ENCODE measurements at regions of chr4 and their contacts with region 1.

Region 1: GRCh38 chr4:108172753-108173598 is 4.2 kb upstream of the LEF1 start:
- DNase-seq: peak; percentile 68 to 81 (median 78)
- ATAC-seq: peak; percentile 67
- H3K4me3 ChIP-seq: peak overlapping the region; percentile 86
- H3K4me3 Mint-ChIP-seq: peak overlapping the region; percentile 89 to 100 (median 94)
- H3K27ac ChIP-seq: peak overlapping the region; percentile 93
- H3K27ac Mint-ChIP-seq: peak overlapping the region; percentile 90 to 97 (median 95)
- H3K4me1 ChIP-seq: peaks cover 3 to 33% of the 10 kb centered on the region in 2 donors
- H3K4me1 Mint-ChIP-seq: peaks cover 27 to 71% (median 61%) of the 10 kb centered on the region in 7 donors
- H3K27me3 ChIP-seq: no peaks in the 10 kb centered on the region
- H3K27me3 Mint-ChIP-seq: peaks cover 0 to 30% (median 0%) of the 10 kb centered on the region in 5 donors

Region 2: GRCh38 chr4:107989537-107990386 is 183.2 kb before region 1 on chr4 and contains the start of gene HADH:
- CTCF ChIA-PET with region 1: no interaction called
- POLR2A ChIA-PET with region 1: no interaction called
- intact Hi-C with region 1: loop called in 1 of 2 experiments (anchors 2 kb)
- DNase-seq: peak; percentile 92 to 98 (median 96)
- ATAC-seq: peak; percentile 100
- H3K4me3 ChIP-seq: peak within 1 kb of the TSS; percentile 57
- H3K4me3 Mint-ChIP-seq: peak within 1 kb of the TSS; percentile 86 to 99 (median 95)
- H3K27ac ChIP-seq: peak within 1 kb of the TSS; percentile 87
- H3K27ac Mint-ChIP-seq: peak within 1 kb of the TSS; percentile 79 to 98 (median 95)
- H3K4me1 ChIP-seq: peaks cover 8 to 37% of the 10 kb centered on the region in 2 donors
- H3K4me1 Mint-ChIP-seq: peaks cover 28 to 85% (median 71%) of the 10 kb centered on the region in 7 donors
- H3K27me3 ChIP-seq: no peaks in the 10 kb centered on the region
- H3K27me3 Mint-ChIP-seq: no peaks in the 10 kb centered on the region
- total RNA-seq, gene HADH: 16.5 to 38.8 (median 29.7) TPM

Region 3: GRCh38 chr4:108109997-108110416 is 63.0 kb before region 1 on chr4:
- CTCF ChIA-PET with region 1: interaction called, 3 read pairs
- POLR2A ChIA-PET with region 1: interaction called, 160 read pairs
- intact Hi-C with region 1: loop called in 1 of 2 experiments (anchors 1 kb)
- DNase-seq: no peak
- ATAC-seq: no peak
- H3K4me3 ChIP-seq: peak overlapping the region; percentile 7
- H3K4me3 Mint-ChIP-seq: peak overlapping the region; percentile 69 to 89 (median 78)
- H3K27ac ChIP-seq: peak overlapping the region; percentile 80
- H3K27ac Mint-ChIP-seq: peak overlapping the region; percentile 84 to 98 (median 90)
- H3K4me1 ChIP-seq: peaks cover 72 to 98% of the 10 kb centered on the region in 2 donors
- H3K4me1 Mint-ChIP-seq: peaks cover 70 to 97% (median 95%) of the 10 kb centered on the region in 7 donors
- H3K27me3 ChIP-seq: no peaks in the 10 kb centered on the region
- H3K27me3 Mint-ChIP-seq: no peaks in the 10 kb centered on the region

Region 4: DNA sequence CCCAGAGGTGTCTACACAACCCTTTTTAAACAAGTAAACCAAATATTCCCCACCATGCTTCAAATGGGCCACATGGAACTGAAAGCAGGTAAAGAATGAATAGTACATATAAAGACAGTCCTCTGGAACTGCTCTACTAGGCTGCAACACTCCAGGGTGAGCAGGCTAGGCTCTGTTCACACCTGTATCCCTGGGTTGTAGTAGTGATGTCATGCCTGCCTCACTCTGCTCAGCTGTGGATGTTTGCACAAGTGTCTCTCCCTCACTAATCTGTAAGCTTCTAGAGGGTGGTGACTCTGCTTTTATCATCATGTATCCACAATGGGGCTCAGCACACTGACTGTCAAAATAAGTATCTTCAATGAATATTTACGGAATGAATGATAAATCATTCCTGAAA is 24.7 kb before region 1 on chr4:
- CTCF ChIA-PET with region 1: no interaction called
- POLR2A ChIA-PET with region 1: interaction called, 31 read pairs
- intact Hi-C with region 1: no loop called
- DNase-seq: peak in 5 of 9 donors; percentile 44 to 82 (median 47)
- ATAC-seq: peak; percentile 74
- H3K4me3 ChIP-seq: peak overlapping the region; percentile 32
- H3K4me3 Mint-ChIP-seq: peak overlapping the region; percentile 41 to 86 (median 80)
- H3K27ac ChIP-seq: peak overlapping the region; percentile 81
- H3K27ac Mint-ChIP-seq: peak overlapping the region; percentile 36 to 97 (median 92)
- H3K4me1 ChIP-seq: peaks cover 25 to 91% of the 10 kb centered on the region in 2 donors
- H3K4me1 Mint-ChIP-seq: peaks cover 56 to 94% (median 93%) of the 10 kb centered on the region in 7 donors
- H3K27me3 ChIP-seq: no peaks in the 10 kb centered on the region
- H3K27me3 Mint-ChIP-seq: no peaks in the 10 kb centered on the region

Region 5: DNA sequence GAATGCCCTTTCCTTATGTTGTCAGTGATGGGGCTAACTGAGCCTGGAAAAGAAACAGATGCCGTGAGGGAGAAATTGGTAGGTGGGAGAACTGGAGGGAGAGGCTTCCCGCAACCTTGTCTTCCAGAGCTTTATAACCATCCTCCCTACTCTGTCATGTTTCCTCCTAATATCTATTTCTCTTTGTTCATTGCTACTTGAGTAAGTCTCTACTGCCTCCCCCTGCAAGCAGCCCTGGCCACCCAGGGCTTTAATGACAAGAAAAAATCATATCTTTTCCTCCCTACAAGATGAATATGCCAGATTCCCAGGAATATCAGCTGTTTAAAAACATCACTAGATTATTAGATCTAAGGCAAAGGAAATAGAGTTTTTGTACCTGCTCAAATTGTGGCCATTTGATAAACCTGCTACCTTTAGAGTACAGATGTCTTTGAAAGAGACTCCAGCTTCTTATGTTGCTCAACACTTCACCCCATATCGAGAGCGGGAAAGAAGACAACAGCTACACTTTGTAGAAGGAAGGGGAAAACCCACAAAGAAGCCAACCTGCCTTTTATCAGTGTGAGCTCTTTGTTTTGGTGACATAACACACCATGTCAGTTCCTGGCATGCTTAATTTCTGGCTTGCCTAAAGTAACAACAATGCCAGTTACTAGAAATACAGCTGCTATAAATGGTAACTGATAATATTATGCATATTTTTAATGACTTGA is 182.4 kb after region 1 on chr4:
- CTCF ChIA-PET with region 1: interaction called, 3 read pairs
- POLR2A ChIA-PET with region 1: interaction called, 12 read pairs
- intact Hi-C with region 1: loop called (anchors 1 kb)
- DNase-seq: peak in 8 of 9 donors; percentile 28 to 92 (median 86)
- ATAC-seq: peak; percentile 90
- H3K4me3 ChIP-seq: peak overlapping the region; percentile 20
- H3K4me3 Mint-ChIP-seq: peak overlapping the region; percentile 57 to 87 (median 70)
- H3K27ac ChIP-seq: peak overlapping the region; percentile 86
- H3K27ac Mint-ChIP-seq: peak overlapping the region; percentile 76 to 99 (median 96)
- H3K4me1 ChIP-seq: peaks cover 17 to 59% of the 10 kb centered on the region in 2 donors
- H3K4me1 Mint-ChIP-seq: peaks cover 34 to 96% (median 83%) of the 10 kb centered on the region in 7 donors
- H3K27me3 ChIP-seq: no peaks in the 10 kb centered on the region
- H3K27me3 Mint-ChIP-seq: peaks cover 0 to 14% (median 0%) of the 10 kb centered on the region in 5 donors

Region 6: GRCh38 chr4:108512615-108513505 is 339.9 kb after region 1 on chr4:
- CTCF ChIA-PET with region 1: interaction called, 4 read pairs
- POLR2A ChIA-PET with region 1: interaction called, 3 read pairs
- intact Hi-C with region 1: loop called in 1 of 2 experiments (anchors 2 kb)
- DNase-seq: peak in 7 of 9 donors; percentile 42 to 68 (median 58)
- ATAC-seq: peak; percentile 82
- H3K4me3 ChIP-seq: peak overlapping the region; percentile 6
- H3K4me3 Mint-ChIP-seq: peak overlapping the region; percentile 72 to 87 (median 80)
- H3K27ac ChIP-seq: no peak overlapping the region
- H3K27ac Mint-ChIP-seq: peak overlapping the region in 7 of 9 donors; percentile 33 to 79 (median 71)
- H3K4me1 ChIP-seq: peaks cover 0 to 10% of the 10 kb centered on the region in 2 donors
- H3K4me1 Mint-ChIP-seq: peaks cover 9 to 37% (median 23%) of the 10 kb centered on the region in 7 donors
- H3K27me3 ChIP-seq: no peaks in the 10 kb centered on the region
- H3K27me3 Mint-ChIP-seq: peaks cover 0 to 11% (median 0%) of the 10 kb centered on the region in 5 donors

Region 7: DNA sequence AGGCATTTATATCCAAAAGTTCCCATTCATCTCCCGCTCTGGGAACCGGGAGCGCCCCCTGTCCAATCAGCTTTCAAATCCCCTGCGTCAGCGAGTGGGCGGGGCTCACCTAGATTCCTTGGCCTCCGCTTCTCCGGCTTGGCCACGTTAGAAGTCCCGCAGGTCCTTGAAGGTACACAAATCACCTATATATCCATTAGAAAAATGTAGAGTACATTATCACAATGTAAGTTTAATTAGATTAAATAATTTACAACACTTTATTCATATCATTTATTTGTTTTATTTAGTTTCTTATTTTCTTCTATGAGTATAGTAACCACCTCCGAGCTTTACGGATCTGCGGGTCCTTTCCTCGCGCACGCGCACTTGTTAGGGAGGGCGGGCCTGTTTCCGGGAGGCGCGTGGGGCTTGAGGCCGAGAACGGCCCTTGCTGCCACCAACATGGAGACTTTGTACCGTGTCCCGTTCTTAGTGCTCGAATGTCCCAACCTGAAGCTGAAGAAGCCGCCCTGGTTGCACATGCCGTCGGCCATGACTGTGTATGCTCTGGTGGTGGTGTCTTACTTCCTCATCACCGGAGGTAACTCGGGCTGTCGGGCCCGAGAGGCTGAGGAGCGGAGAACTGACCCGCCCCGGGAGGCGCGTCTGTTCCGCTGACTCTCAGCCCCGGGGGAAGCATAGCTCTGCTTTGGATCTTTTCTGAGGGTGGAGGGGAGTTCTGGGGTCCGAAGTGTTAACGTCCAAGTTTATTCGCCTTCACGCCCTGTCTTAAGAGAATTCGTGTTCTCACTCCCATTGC is 477.4 kb after region 1 on chr4 and contains the start of gene OSTC:
- CTCF ChIA-PET with region 1: no interaction called
- POLR2A ChIA-PET with region 1: interaction called, 3 read pairs
- intact Hi-C with region 1: loop called in 1 of 2 experiments (anchors 2 kb)
- DNase-seq: peak; percentile 88 to 95 (median 91)
- ATAC-seq: peak; percentile 94
- H3K4me3 ChIP-seq: peak within 1 kb of the TSS; percentile 98
- H3K4me3 Mint-ChIP-seq: peak within 1 kb of the TSS; percentile 90 to 99 (median 94)
- H3K27ac ChIP-seq: peak within 1 kb of the TSS; percentile 96
- H3K27ac Mint-ChIP-seq: peak within 1 kb of the TSS; percentile 89 to 99 (median 98)
- H3K4me1 ChIP-seq: peaks cover 8 to 13% of the 10 kb centered on the region in 2 donors
- H3K4me1 Mint-ChIP-seq: peaks cover 22 to 49% (median 41%) of the 10 kb centered on the region in 7 donors
- H3K27me3 ChIP-seq: no peaks in the 10 kb centered on the region
- H3K27me3 Mint-ChIP-seq: no peaks in the 10 kb centered on the region
- total RNA-seq, gene OSTC: 31.8 to 98.2 (median 55.6) TPM

Measured in naive thymus-derived CD4-positive, alpha-beta T cell (primary cell).